Cardiac septum (tissue), 1 donor: ENCODE measurements at regions of chr6 and their contacts with region 1.

Region 1: GRCh38 chr6:157503018-157503747 is 122.2 kb downstream of the ZDHHC14 start:
- DNase-seq: no peak

Region 2: GRCh38 chr6:157379656-157380454 is 123.3 kb before region 1 on chr6:
- intact Hi-C with region 1: no loop called
- DNase-seq: peak; percentile 94

Region 3: GRCh38 chr6:157548635-157549467 is 45.7 kb after region 1 on chr6:
- intact Hi-C with region 1: no loop called
- DNase-seq: no peak

Region 4: DNA sequence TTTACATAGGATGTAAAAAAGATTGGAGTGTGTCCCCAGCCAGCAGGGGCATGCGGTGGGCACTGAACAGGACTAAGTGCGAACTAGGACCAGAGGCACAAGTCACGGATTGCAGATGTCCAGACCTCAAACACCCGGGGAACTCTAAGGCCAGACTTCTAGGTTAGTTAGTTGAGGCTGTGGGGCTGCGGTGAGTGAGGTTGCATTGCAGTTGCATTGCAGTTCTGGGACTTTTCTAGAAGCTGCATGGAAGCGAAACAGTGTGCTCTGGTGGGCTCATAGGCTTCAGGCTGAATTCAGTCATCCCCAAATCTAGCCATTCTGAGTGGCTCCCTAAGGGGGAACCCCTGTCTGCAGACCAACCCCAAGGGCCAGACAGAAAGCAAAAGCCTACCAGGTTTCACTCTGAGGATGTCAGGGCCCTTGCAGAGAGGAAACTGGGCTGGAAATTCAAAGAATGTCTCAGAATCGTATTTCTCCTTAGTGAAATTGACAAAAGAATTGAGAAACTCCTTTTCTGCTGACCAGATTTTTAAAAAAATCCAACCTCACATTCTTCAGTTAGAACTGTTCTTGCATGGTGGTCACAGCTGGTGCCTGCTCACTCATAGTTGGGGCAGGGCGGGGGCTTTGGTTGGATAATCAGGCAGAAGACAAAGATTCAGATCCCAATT is 60.6 kb after region 1 on chr6:
- intact Hi-C with region 1: loop called (anchors 10 kb)
- DNase-seq: no peak